HCT116 (cell line): ENCODE measurements at regions of chr15 and their contacts with region 1.

Region 1: GRCh38 chr15:32765236-32765635 is 47.4 kb downstream of the GREM1 start:
- DNase-seq: no peak
- ATAC-seq: no peak
- H3K4me3 ChIP-seq: no peak overlapping the region
- H3K27ac ChIP-seq: no peak overlapping the region
- H3K4me1 ChIP-seq: no peaks in the 10 kb centered on the region
- H3K27me3 ChIP-seq: no peaks in the 10 kb centered on the region
- CTCF ChIP-seq: no peak
- POLR2A ChIP-seq: no peak
- RAD21 ChIP-seq: no peak

Region 2: GRCh38 chr15:32743411-32744140 is 21.7 kb before region 1 on chr15:
- CTCF ChIA-PET with region 1: no interaction called
- POLR2A ChIA-PET with region 1: no interaction called
- RAD21 ChIA-PET with region 1: no interaction called
- intact Hi-C with region 1: loop called (anchors 1 kb)
- DNase-seq: no peak
- ATAC-seq: no peak
- H3K4me3 ChIP-seq: no peak overlapping the region
- H3K27ac ChIP-seq: no peak overlapping the region
- H3K4me1 ChIP-seq: no peaks in the 10 kb centered on the region
- H3K27me3 ChIP-seq: no peaks in the 10 kb centered on the region
- CTCF ChIP-seq: no peak
- POLR2A ChIP-seq: no peak
- RAD21 ChIP-seq: no peak

Region 3: DNA sequence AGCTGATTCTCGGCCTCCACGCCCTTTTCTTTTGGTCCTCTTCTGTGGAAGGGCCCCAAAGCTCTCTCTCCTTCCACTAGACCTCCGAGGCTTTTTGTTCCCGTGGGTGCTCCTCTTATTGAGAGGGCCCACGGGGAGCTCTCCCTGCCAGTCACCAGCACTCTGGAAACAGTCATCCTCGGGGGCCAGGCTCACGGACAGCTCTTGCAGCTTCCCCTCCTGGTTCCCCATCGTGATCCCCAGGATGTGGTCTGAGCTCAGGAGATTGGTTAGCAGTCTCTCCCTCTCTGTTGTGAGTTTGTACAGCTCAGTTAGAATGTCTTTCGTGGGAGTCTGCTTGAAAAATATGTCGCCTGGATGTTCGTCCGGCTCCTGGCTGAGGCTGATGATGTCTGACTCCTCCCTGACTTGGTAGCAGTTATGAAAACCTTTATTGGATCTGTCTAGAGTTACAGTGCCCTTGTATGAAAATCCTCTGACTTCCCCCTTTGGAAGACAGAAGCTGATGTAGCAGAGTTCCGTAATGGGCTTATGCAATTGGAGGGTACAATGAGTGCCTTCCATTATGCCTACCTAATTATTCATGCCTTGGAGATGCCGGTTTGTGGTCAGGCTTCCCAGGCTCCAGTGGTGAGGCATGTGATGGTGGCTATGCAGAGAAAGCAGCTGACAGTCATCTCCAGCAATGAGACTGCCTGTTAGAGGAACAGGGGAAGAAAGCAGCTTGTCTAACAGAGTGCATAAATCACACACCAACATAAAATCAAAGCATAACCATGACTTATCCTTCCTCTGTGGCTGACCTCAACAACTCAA is 389.3 kb after region 1 on chr15:
- CTCF ChIA-PET with region 1: no interaction called
- POLR2A ChIA-PET with region 1: no interaction called
- RAD21 ChIA-PET with region 1: no interaction called
- intact Hi-C with region 1: no loop called
- DNase-seq: no peak
- ATAC-seq: no peak
- H3K4me3 ChIP-seq: no peak overlapping the region
- H3K27ac ChIP-seq: no peak overlapping the region
- H3K4me1 ChIP-seq: no peaks in the 10 kb centered on the region
- H3K27me3 ChIP-seq: no peaks in the 10 kb centered on the region
- CTCF ChIP-seq: no peak
- POLR2A ChIP-seq: no peak
- RAD21 ChIP-seq: no peak